ENCODE measurements at regions of chr12 and their contacts with region 1.

Region 1: GRCh38 chr12:57845478-57846284 is 848 bp downstream of the CTDSP2 start:
- DNase-seq: no peak
- H3K4me3 ChIP-seq: peak overlapping the region; percentile 93 to 96
- H3K27ac ChIP-seq: peak overlapping the region; percentile 99
- H3K4me1 ChIP-seq: peaks cover 45% of the 10 kb centered on the region
- H3K27me3 ChIP-seq: no peaks in the 10 kb centered on the region
- CTCF ChIP-seq: no peak
- POLR2A ChIP-seq: no peak

Region 2: GRCh38 chr12:57893431-57894353 is 48.0 kb after region 1 on chr12:
- intact Hi-C with region 1: loop called (anchors 2 kb)
- DNase-seq: peak in 1 of 2 donors; percentile 100
- H3K4me3 ChIP-seq: peak overlapping the region; percentile 1 to 20
- H3K27ac ChIP-seq: peak overlapping the region; percentile 97
- H3K4me1 ChIP-seq: peaks cover 96% of the 10 kb centered on the region
- H3K27me3 ChIP-seq: no peaks in the 10 kb centered on the region
- CTCF ChIP-seq: peak in 1 of 3 experiments; percentile 28
- POLR2A ChIP-seq: peak in 1 of 2 donors; percentile 5